Activated T-helper 1 cell treated with anti-CD3 and anti-CD28 coated beads, Interleukin-12 subunit alpha, Interleukin-12 subunit beta, Interleukin-2, Interleukin-4 antibody, amounts not matched to agents 30 ng/mL and 10 ng/mL and 1 ng/mL, durations not matched to agents 14 hours and 24 hours and 36 hours (primary cell): ENCODE measurements at regions of chr6 and their contacts with region 1.

Region 1: DNA sequence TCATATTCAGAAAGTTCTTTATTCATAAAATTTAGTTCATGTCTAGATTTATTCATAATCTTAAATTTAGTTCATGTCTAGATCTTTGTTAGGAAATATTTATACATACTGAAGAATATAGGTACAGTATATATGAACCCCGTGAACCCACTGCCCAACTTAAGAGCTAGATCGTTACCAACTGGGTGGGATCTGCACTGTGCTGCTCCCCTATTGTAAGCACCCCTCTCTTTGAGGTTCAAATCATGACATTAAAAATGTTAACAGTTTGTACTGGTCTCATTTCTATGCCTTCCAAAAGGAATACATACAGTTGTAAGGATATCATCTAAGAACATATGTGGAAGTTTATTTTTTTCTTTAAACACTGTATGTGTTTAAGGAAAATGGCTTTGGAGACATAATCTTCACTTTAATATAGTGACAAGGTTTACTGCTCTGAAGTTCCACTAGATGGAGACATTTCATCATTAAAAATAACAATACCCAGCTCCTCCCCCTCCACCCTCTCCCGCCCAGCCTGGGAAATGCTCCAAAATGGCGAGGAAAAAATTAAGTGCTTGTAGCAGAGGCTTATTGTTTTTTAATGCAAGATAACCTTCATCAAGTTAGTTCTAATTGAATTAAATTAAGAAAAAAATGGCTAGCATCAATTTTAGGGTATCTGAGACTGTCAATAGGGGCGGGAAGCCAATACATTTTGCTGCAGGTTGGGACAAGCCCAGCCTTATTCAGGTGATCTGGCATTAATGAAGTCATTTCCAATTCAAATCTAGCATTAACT is 104.1 kb upstream of the TRAF3IP2 start:
- DNase-seq: peak; percentile 41
- H3K4me3 Mint-ChIP-seq: peak overlapping the region; percentile 45
- H3K27ac Mint-ChIP-seq: peak overlapping the region; percentile 44
- H3K4me1 Mint-ChIP-seq: peaks cover 66% of the 10 kb centered on the region
- H3K27me3 Mint-ChIP-seq: no peaks in the 10 kb centered on the region

Region 2: GRCh38 chr6:111750753-111751684 is 41.2 kb after region 1 on chr6:
- intact Hi-C with region 1: loop called (anchors 2 kb)
- DNase-seq: peak; percentile 66
- H3K4me3 Mint-ChIP-seq: peak overlapping the region; percentile 70
- H3K27ac Mint-ChIP-seq: peak overlapping the region; percentile 97
- H3K4me1 Mint-ChIP-seq: peaks cover 95% of the 10 kb centered on the region
- H3K27me3 Mint-ChIP-seq: no peaks in the 10 kb centered on the region

Region 3: DNA sequence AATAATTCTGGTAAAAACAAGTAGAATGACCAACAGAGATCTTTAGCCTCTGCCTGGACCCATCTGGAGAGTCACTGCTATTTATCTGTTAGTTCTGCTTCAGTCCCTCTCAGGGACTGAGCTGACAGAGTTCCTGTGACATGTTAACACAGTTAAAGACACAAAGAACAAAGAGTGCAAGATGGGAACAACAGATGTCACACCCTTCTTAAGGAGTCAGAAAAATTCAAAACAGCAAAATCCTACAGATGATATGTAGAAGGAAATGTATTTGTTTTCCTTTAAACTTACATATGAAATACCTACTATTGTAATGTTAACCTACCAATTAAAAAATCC is 61.3 kb after region 1 on chr6:
- intact Hi-C with region 1: no loop called
- DNase-seq: no peak
- H3K4me3 Mint-ChIP-seq: no peak overlapping the region
- H3K27ac Mint-ChIP-seq: no peak overlapping the region
- H3K4me1 Mint-ChIP-seq: peaks cover 80% of the 10 kb centered on the region
- H3K27me3 Mint-ChIP-seq: no peaks in the 10 kb centered on the region

Region 4: GRCh38 chr6:111823831-111824607 is 114.2 kb after region 1 on chr6:
- intact Hi-C with region 1: loop called (anchors 5 kb)
- DNase-seq: no peak
- H3K4me3 Mint-ChIP-seq: peak overlapping the region; percentile 72
- H3K27ac Mint-ChIP-seq: peak overlapping the region; percentile 89
- H3K4me1 Mint-ChIP-seq: peaks cover 81% of the 10 kb centered on the region
- H3K27me3 Mint-ChIP-seq: no peaks in the 10 kb centered on the region

Region 5: GRCh38 chr6:111912904-111913303 is 203.1 kb after region 1 on chr6:
- intact Hi-C with region 1: loop called (anchors 1 kb)
- DNase-seq: no peak
- H3K4me3 Mint-ChIP-seq: no peak overlapping the region
- H3K27ac Mint-ChIP-seq: no peak overlapping the region
- H3K4me1 Mint-ChIP-seq: peaks cover 6% of the 10 kb centered on the region
- H3K27me3 Mint-ChIP-seq: no peaks in the 10 kb centered on the region

Region 6: GRCh38 chr6:111997078-111997852 is 287.5 kb after region 1 on chr6:
- intact Hi-C with region 1: loop called (anchors 1 kb)
- DNase-seq: peak; percentile 68
- H3K4me3 Mint-ChIP-seq: peak overlapping the region; percentile 45
- H3K27ac Mint-ChIP-seq: peak overlapping the region; percentile 46
- H3K4me1 Mint-ChIP-seq: peaks cover 46% of the 10 kb centered on the region
- H3K27me3 Mint-ChIP-seq: no peaks in the 10 kb centered on the region

Region 7: DNA sequence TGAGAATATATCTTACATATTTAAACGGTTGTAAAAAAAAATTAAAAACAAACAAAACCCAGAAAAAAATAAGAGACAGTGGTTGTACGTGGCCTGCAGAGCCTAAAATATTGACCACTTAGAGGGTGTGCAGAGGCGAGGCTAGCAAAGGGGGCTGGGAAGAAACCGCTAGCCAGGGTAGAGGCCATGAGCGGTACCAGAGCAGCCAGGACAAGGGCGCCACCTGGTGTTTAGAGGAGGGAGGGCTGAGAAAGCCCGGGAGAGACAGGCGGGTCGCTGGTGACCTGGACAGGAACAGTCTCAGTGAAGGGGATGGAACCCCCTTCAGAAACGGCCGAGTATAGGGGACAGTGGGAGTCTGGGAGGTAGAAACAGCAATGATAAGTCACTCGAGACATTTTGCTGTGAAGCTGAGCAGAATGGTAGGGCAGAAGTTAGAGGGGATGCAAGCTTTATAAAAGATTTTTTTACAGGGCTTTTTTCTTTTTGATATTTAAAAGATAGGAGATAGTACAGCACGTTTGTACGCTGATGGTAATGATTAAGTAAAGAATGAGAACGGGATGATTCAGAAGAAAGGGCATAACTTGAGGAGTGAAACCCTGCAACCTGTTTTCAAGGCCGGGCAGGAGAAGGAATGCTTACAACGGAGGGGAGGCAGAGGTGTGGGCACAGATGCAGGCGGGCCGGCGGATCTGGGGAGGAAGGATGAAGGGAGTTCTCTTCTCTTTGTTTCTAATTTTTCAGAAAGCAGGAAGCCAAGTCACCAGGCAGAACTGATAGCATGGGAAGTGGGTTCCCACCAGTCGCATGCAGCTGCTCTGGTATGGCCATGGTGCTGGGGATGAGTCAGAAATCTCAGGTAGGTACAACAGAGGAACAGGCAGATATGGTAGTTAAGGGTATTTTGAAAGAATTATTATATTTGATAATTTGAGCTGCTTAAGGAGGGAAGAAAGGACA is 453.8 kb after region 1 on chr6:
- intact Hi-C with region 1: loop called (anchors 2 kb)
- DNase-seq: peak; percentile 54
- H3K4me3 Mint-ChIP-seq: peak overlapping the region; percentile 53
- H3K27ac Mint-ChIP-seq: no peak overlapping the region
- H3K4me1 Mint-ChIP-seq: peaks cover 12% of the 10 kb centered on the region
- H3K27me3 Mint-ChIP-seq: peaks cover 51% of the 10 kb centered on the region